Activated CD4-positive, alpha-beta T cell treated with anti-CD3 and anti-CD28 coated beads, Interleukin-2, amount 10 ng/mL, durations not matched to agents 7 days and 5 days (primary cell): ENCODE measurements at regions of chr9 and their contacts with region 1.

Region 1: DNA sequence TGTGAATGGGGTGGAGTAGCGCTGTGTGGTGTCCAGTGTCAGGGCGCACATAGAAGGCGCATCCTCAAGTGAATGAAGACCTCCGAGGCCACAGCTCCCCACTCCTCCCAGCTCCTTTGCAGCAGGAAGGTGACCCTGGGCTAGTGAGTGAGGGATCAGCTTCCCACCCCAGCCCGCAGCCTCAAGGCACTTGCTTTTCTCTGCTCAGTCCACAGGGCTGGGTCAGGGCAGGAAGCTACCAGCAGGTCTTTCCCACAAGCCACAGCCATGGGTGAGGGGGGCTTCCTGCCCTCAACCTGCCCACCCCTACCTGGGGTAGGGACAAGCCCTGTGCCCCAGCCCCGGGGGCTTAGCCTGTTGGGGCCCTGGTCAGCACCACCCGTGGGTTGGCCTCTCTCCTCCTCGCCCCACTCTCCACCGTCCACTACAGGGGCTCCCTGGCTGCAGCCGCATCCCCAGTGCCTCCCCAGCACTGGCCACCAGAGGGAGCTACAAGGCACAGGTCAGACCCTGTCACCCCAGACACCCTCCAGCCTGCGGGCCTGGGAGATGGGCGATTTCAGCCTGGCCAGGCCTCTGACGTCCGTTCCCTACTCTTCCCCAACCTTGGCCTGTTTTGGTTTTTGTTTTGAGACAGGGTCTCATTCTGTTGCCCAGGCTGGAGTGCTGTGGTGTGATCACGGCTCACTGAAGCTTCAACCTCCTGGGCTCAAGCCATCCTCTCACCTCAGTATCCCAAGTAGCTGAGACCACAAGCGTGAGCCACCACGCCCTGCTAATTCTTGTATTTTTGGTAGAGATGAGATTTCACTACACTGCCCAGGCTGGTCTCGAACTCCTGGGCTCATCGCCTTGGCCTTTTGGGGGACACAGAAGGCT is 1.3 kb upstream of the ABCA2 start:
- DNase-seq: peak; percentile 70
- H3K4me3 Mint-ChIP-seq: peak overlapping the region; percentile 75
- H3K27ac Mint-ChIP-seq: peak overlapping the region; percentile 87
- H3K4me1 Mint-ChIP-seq: peaks cover 54% of the 10 kb centered on the region
- H3K27me3 Mint-ChIP-seq: no peaks in the 10 kb centered on the region

Region 2: DNA sequence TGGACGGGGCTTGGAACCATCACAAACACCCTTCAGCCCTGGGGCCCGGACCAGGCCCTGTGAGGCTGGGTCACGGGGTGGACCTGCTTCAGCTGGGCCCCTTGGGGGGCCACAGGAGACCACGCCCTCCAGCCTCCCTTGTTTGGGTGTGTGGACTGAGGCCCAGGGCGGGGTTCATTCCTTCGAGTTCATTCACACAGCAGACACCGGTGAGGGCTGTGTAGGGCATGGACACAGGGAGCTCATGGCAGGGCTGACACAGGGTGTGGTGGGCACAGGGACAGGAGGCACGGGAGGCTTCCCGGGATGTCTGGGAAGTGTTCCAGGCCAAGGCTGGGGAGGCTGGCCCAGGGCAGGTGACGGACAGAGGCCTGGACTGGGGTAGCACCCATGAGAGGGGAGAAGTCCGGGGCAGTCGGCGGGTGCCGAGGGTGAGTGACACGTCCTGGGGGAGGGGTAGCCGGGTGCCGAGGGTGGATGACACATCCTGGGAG is 674.7 kb before region 1 on chr9:
- CTCF ChIA-PET with region 1: no interaction called
- POLR2A ChIA-PET with region 1: no interaction called
- DNase-seq: no peak
- H3K4me3 Mint-ChIP-seq: no peak overlapping the region
- H3K27ac Mint-ChIP-seq: no peak overlapping the region
- H3K4me1 Mint-ChIP-seq: no peaks in the 10 kb centered on the region
- H3K27me3 Mint-ChIP-seq: no peaks in the 10 kb centered on the region

Region 3: DNA sequence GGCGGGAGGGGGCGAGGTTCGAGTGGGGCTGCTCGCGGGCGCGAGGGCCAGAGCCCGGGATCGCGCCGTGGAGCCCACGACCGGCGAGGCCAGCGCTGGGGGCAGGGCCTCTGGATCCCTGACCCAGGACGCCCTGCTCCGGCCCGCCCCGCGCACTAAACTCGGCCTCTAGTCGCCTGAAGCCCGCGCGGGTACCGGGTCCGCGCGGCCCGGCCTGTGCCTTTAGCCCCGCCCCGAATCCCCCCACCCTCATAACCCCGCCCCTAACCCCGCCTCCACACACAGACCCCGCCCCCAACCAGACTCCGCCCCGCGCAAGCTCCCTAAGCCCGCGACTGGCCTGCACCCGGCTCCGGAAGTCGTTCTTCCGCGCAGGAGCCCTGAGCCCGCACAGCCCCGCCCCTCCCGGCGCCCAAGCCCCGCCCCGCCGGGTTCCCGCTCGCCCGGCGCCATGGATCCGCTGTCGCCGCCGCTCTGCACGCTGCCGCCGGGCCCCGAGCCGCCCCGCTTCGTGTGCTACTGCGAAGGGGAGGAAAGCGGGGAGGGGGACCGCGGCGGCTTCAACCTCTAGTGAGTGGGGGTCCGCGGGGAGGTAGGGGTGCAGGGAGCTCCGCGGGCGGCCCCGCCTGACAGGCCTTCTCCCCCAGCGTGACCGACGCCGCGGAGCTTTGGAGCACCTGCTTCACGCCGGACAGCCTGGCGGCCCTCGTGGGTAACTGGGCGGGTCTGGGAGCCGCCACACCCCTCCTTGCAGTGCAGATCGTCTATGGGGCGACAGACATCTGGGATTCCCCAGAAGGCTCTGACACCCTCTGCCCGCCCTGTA is 37.1 kb before region 1 on chr9 and contains the start of gene PAXX:
- CTCF ChIA-PET with region 1: interaction called, 16 read pairs
- POLR2A ChIA-PET with region 1: no interaction called
- DNase-seq: peak; percentile 93
- H3K4me3 Mint-ChIP-seq: peak within 1 kb of the TSS; percentile 82
- H3K27ac Mint-ChIP-seq: peak within 1 kb of the TSS; percentile 86
- H3K4me1 Mint-ChIP-seq: peaks cover 25% of the 10 kb centered on the region
- H3K27me3 Mint-ChIP-seq: peaks cover 12% of the 10 kb centered on the region
- total RNA-seq, gene PAXX: 80.2 to 98.4 TPM

Region 4: GRCh38 chr9:137000177-137000883 is 29.0 kb before region 1 on chr9:
- CTCF ChIA-PET with region 1: interaction called, 15 read pairs
- POLR2A ChIA-PET with region 1: no interaction called
- DNase-seq: peak; percentile 49
- H3K4me3 Mint-ChIP-seq: peak overlapping the region; percentile 25
- H3K27ac Mint-ChIP-seq: peak overlapping the region; percentile 75
- H3K4me1 Mint-ChIP-seq: peaks cover 42% of the 10 kb centered on the region
- H3K27me3 Mint-ChIP-seq: peaks cover 6% of the 10 kb centered on the region

Region 5: DNA sequence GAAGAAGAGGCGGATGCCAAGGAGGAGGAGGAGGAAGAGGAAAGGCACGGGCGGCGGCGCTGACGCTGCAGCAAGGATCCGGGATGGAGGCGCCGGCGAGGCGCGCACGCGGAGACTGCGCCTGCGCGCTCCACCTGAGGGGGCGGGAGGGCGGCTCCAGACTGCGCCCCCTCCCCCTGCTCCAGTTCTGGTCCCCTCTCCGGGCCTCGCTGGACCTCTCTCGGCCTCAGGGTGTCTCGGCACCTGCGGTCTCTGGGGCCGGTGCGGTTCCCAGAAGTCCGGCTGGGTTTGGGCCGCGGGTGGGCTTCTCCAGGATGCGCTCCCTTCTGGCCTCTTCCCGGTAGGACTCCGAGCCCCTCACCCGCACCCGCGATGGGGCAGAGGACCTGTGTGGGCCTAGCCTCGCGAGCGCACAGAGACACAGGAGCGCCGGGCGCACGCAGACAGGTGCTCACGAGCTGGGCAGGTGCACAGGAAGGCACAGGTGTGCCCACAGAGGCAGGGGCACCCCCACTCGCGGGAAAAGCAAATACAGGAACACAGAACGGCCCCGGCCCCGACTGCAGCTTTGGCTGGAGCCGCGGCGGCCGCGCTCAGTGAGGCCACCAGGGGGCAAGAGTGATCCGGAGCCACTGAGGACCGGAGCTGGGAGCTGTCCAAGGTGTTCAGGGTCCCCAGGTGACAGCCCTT is 16.9 kb after region 1 on chr9 and contains the start of gene NPDC1:
- CTCF ChIA-PET with region 1: interaction called, 59 read pairs
- POLR2A ChIA-PET with region 1: no interaction called
- DNase-seq: peak; percentile 86
- H3K4me3 Mint-ChIP-seq: peak within 1 kb of the TSS; percentile 70
- H3K27ac Mint-ChIP-seq: peak within 1 kb of the TSS; percentile 54
- H3K4me1 Mint-ChIP-seq: peaks cover 19% of the 10 kb centered on the region
- H3K27me3 Mint-ChIP-seq: peaks cover 32% of the 10 kb centered on the region
- total RNA-seq, gene NPDC1: 35.5 to 41.4 TPM

Region 6: DNA sequence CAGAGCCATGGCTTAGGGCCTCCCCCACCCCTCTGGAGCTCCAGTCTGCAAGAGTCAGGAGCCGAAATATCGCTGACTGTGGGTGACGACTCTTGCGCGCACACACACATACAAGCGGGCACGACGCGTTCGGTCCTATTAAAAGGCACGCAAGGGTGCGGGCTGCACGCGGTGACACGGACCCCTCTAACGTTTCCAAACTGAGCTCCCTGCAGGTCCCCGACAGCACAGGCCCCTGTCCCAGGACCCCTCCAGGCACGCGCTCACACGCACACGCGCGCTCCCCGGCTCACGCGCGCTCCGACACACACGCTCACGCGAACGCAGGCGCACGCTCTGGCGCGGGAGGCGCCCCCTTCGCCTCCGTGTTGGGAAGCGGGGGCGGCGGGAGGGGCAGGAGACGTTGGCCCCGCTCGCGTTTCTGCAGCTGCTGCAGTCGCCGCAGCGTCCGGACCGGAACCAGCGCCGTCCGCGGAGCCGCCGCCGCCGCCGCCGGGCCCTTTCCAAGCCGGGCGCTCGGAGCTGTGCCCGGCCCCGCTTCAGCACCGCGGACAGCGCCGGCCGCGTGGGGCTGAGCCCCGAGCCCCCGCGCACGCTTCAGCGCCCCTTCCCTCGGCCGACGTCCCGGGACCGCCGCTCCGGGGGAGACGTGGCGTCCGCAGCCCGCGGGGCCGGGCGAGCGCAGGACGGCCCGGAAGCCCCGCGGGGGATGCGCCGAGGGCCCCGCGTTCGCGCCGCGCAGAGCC is 109.6 kb after region 1 on chr9 and contains the start of gene GRIN1:
- CTCF ChIA-PET with region 1: no interaction called
- POLR2A ChIA-PET with region 1: no interaction called
- DNase-seq: peak; percentile 45
- H3K4me3 Mint-ChIP-seq: no peak within 1 kb of the TSS
- H3K27ac Mint-ChIP-seq: no peak within 1 kb of the TSS
- H3K4me1 Mint-ChIP-seq: peaks cover 14% of the 10 kb centered on the region
- H3K27me3 Mint-ChIP-seq: peaks cover 50% of the 10 kb centered on the region
- total RNA-seq, gene GRIN1: 0.05 TPM in 1 of 2 experiments, not detected in the other